CD8-positive, alpha-beta T cell (primary cell): ENCODE measurements at regions of chr22 and their contacts with region 1.

Region 1: DNA sequence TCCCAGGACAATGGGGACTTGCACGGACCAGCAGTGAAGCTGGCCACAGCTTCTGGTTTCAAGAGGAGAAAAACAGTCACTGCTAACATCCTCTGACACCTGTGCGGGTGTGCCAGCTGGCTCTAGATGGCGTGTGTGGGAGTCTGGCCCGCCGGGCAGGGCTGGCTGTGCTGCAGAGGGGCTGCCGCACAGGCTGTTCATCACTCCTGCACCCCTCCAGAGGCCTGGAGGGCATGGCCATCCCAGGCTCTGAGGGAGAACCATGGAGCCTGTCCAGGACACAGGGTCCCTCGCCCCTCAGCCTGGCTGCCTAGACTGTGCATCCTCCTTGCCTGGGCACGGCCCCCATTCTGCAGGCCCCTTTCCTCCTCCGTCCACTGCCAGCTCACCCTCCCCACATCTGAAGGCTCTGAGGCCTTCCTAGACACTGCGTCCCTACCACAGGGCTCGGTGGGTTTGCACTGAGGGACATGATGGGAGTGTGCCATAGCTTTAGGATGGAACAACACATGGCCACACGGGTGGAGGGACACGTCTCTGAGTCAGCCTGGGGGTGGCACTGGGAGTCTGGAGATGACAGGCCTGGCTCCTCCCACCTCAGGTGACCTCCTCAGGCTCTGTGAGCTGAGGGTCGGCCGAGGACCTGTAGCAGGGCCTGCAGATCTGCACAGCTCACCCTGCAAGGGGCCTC is 42.1 kb upstream of the GNB1L start:
- DNase-seq: peak in 7 of 9 experiments; percentile 24 to 69 (median 43)
- ATAC-seq: peak; percentile 17
- H3K4me3 ChIP-seq: no peak overlapping the region
- H3K4me3 Mint-ChIP-seq: no peak overlapping the region
- H3K27ac ChIP-seq: no peak overlapping the region
- H3K27ac Mint-ChIP-seq: peak overlapping the region; percentile 99
- H3K4me1 ChIP-seq: peaks cover 57% of the 10 kb centered on the region
- H3K4me1 Mint-ChIP-seq: peaks cover 55% of the 10 kb centered on the region
- H3K27me3 ChIP-seq: no peaks in the 10 kb centered on the region
- H3K27me3 Mint-ChIP-seq: no peaks in the 10 kb centered on the region
- CTCF ChIP-seq: no peak

Region 2: DNA sequence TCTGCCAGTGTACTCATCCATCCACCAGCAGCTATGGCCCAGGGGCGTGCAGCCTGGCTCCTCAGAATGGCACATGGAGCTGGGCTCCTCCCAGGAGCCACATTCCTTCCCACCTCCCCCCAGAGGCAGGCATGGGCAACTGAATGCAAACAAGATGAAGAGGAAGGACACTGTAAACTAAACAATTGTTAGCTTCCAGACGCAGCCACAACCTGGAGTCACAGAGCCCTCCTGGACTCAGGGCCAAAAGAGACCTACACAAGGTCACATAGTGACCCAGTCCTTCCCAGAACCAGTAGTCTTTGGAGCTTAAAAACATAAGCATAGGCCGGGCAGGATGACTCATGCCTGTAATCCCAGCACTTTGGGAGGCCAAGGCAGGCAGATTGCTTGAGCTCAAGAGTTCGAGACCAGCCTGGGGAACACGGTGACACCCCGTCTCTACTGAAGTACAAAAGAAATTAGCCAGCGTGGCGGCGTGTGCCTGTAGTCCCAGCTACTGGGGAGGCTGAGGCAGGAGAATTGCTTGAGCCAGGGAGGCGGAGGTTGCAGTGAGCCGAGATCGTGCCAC is 341.9 kb before region 1 on chr22:
- CTCF ChIA-PET with region 1: no interaction called
- POLR2A ChIA-PET with region 1: no interaction called
- intact Hi-C with region 1: no loop called
- DNase-seq: no peak
- ATAC-seq: no peak
- H3K4me3 ChIP-seq: no peak overlapping the region
- H3K4me3 Mint-ChIP-seq: no peak overlapping the region
- H3K27ac ChIP-seq: no peak overlapping the region
- H3K27ac Mint-ChIP-seq: no peak overlapping the region
- H3K4me1 ChIP-seq: no peaks in the 10 kb centered on the region
- H3K4me1 Mint-ChIP-seq: no peaks in the 10 kb centered on the region
- H3K27me3 ChIP-seq: no peaks in the 10 kb centered on the region
- H3K27me3 Mint-ChIP-seq: no peaks in the 10 kb centered on the region
- CTCF ChIP-seq: no peak

Region 3: GRCh38 chr22:19756288-19757128 is 140.3 kb before region 1 on chr22:
- CTCF ChIA-PET with region 1: interaction called, 10 read pairs
- POLR2A ChIA-PET with region 1: no interaction called
- intact Hi-C with region 1: loop called in 1 of 2 experiments (anchors 5 kb)
- DNase-seq: peak; percentile 37 to 82 (median 67)
- ATAC-seq: peak; percentile 72
- H3K4me3 ChIP-seq: peak overlapping the region; percentile 15 to 17
- H3K4me3 Mint-ChIP-seq: peak overlapping the region; percentile 74
- H3K27ac ChIP-seq: no peak overlapping the region
- H3K27ac Mint-ChIP-seq: no peak overlapping the region
- H3K4me1 ChIP-seq: peaks cover 26% of the 10 kb centered on the region
- H3K4me1 Mint-ChIP-seq: peaks cover 31% of the 10 kb centered on the region
- H3K27me3 ChIP-seq: peaks cover 24 to 38% of the 10 kb centered on the region in 2 experiments
- H3K27me3 Mint-ChIP-seq: peaks cover 49% of the 10 kb centered on the region
- CTCF ChIP-seq: peak; percentile 37